ENCODE measurements at regions of chr10 and their contacts with region 1.

Region 1: GRCh38 chr10:3623746-3624145 is 161.3 kb downstream of the KLF6 start:
- DNase-seq: no peak
- H3K4me3 Mint-ChIP-seq: no peak overlapping the region
- H3K27ac Mint-ChIP-seq: peak overlapping the region; percentile 83
- H3K4me1 Mint-ChIP-seq: peaks cover 28% of the 10 kb centered on the region
- H3K27me3 Mint-ChIP-seq: no peaks in the 10 kb centered on the region

Region 2: GRCh38 chr10:3467052-3467951 is 156.4 kb before region 1 on chr10:
- CTCF ChIA-PET with region 1: no interaction called
- POLR2A ChIA-PET with region 1: interaction called, 3 read pairs
- intact Hi-C with region 1: loop called (anchors 2 kb)
- DNase-seq: peak; percentile 29
- H3K4me3 Mint-ChIP-seq: peak overlapping the region; percentile 64
- H3K27ac Mint-ChIP-seq: peak overlapping the region; percentile 63
- H3K4me1 Mint-ChIP-seq: peaks cover 46% of the 10 kb centered on the region
- H3K27me3 Mint-ChIP-seq: no peaks in the 10 kb centered on the region

Region 3: GRCh38 chr10:3668276-3668965 is 44.7 kb after region 1 on chr10:
- CTCF ChIA-PET with region 1: no interaction called
- POLR2A ChIA-PET with region 1: no interaction called
- intact Hi-C with region 1: loop called (anchors 2 kb)
- DNase-seq: peak; percentile 76
- H3K4me3 Mint-ChIP-seq: peak overlapping the region; percentile 72
- H3K27ac Mint-ChIP-seq: peak overlapping the region; percentile 79
- H3K4me1 Mint-ChIP-seq: peaks cover 38% of the 10 kb centered on the region
- H3K27me3 Mint-ChIP-seq: no peaks in the 10 kb centered on the region

Region 4: DNA sequence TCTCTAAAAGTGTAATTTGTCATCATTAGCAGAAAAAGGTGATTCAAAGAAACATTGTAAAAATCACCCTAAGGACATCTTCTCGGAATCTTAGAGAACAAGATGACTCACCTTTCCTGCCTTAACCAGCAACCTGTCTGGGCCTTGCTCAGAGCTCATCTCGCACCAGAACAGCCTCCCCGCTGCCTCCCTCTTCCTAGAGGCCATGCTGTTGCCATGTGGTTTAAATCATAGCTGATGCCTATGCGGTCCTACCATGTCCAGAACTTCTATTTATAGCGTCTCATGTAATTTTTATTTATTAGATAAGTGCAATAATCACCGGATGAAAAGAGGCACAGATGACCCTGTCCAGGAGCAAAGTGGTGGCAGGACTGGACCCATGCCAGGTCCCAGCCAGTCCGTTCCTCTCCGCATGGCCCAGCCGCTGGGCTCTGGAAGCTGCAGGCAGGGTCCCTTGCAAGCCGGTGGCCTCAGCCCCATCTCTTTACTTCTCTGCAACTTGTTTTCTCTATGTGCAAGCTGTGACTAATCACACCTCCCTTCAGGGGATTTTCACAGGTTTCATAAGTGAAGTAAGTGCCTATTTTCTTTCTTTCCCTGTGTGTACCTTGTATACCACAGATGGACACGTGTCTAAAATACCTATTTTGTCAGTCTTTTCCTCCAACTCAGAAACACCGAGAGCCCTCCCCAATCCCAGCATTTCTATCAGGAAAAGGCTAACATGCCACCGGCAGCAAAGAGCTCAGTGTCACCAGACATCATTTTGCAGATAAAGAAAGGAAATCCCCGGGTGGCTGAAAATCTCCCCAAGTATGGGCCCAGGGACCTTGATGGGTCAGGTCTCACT is 134.1 kb after region 1 on chr10:
- CTCF ChIA-PET with region 1: no interaction called
- POLR2A ChIA-PET with region 1: interaction called, 7 read pairs
- intact Hi-C with region 1: loop called (anchors 1 kb)
- DNase-seq: peak; percentile 84
- H3K4me3 Mint-ChIP-seq: peak overlapping the region; percentile 71
- H3K27ac Mint-ChIP-seq: peak overlapping the region; percentile 100
- H3K4me1 Mint-ChIP-seq: peaks cover 83% of the 10 kb centered on the region
- H3K27me3 Mint-ChIP-seq: no peaks in the 10 kb centered on the region

Region 5: DNA sequence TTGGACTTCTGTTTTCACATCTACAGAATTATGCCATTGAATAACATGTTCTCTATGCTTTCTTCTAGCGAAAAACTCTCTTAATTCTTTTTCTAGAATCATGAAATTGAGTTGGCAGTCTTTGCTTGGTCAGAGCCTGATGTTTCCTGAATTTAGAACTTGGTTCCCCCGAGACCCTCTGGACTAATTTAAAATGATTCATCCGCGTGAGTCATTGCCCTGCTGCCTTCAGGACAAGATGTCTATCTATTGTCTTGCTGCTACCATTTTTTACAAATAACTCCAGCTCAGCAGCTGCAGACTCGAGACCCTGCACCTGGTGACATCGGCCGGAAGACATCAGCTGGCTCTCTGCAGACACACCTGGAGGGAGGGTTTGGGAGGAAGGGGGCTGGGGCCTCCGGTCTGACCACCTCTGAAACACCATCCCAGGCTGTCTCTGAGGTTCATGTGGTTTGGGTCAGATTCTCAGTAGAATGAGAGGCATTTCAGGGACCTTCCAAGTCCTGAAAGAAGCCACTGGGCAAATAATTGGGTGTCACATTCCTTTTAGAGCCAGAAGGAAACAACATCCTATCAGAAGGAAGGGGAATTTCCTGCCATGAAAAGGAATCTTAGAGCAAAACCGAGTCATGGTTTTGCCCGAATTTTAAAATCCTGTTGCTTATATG is 182.2 kb after region 1 on chr10:
- CTCF ChIA-PET with region 1: no interaction called
- POLR2A ChIA-PET with region 1: no interaction called
- intact Hi-C with region 1: loop called (anchors 1 kb)
- DNase-seq: peak; percentile 72
- H3K4me3 Mint-ChIP-seq: peak overlapping the region; percentile 68
- H3K27ac Mint-ChIP-seq: no peak overlapping the region
- H3K4me1 Mint-ChIP-seq: peaks cover 62% of the 10 kb centered on the region
- H3K27me3 Mint-ChIP-seq: no peaks in the 10 kb centered on the region

Region 6: GRCh38 chr10:4131407-4132228 is 507.9 kb after region 1 on chr10:
- CTCF ChIA-PET with region 1: no interaction called
- POLR2A ChIA-PET with region 1: no interaction called
- intact Hi-C with region 1: loop called (anchors 2 kb)
- DNase-seq: peak; percentile 42
- H3K4me3 Mint-ChIP-seq: no peak overlapping the region
- H3K27ac Mint-ChIP-seq: no peak overlapping the region
- H3K4me1 Mint-ChIP-seq: peaks cover 39% of the 10 kb centered on the region
- H3K27me3 Mint-ChIP-seq: no peaks in the 10 kb centered on the region

Region 7: DNA sequence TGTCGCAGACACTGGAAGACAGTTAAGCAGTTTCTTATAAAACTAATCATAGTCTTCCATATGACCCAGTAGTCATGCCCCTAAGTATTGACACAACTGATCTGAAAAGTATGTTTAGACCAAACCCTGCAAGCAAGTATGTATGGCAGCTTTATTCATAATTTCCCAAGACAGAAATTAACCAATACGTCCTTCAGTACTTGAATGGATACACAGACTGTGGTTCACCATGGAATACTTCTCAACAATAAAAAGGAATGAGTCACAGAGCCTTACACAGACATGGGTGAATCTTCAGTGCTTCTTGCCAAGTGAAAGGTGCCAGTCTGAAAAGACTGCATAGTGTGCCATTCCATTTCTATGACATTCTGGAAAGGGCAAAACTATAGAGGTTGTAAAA is 1152.1 kb after region 1 on chr10:
- CTCF ChIA-PET with region 1: no interaction called
- POLR2A ChIA-PET with region 1: no interaction called
- intact Hi-C with region 1: loop called (anchors 2 kb)
- DNase-seq: no peak
- H3K4me3 Mint-ChIP-seq: no peak overlapping the region
- H3K27ac Mint-ChIP-seq: peak overlapping the region; percentile 80
- H3K4me1 Mint-ChIP-seq: peaks cover 14% of the 10 kb centered on the region
- H3K27me3 Mint-ChIP-seq: peaks cover 26% of the 10 kb centered on the region